IMR-90 (cell line): ENCODE measurements at regions of chr19 and their contacts with region 1.

Region 1: DNA sequence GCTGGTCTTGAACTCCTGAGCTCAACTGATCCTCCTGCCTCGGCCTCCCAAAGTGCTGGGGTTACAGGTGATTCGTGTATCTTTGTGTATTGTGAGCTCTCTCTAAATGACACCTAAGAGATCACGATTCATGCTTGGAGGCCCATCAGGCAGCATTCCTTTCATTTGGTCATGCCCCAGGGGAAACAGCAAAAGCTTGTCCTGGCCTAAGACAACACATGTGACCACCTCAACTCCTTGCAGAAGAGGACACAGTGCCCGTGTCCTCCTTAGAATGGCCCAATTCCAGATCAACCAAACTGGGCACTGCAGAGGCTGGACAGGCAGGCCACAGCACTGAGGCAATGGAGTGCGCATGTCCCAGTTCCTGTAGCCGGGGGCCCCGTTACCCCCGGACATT is 32.5 kb downstream of the ZC3H4 start:
- DNase-seq: no peak
- ATAC-seq: no peak
- H3K4me3 ChIP-seq: no peak overlapping the region
- H3K27ac ChIP-seq: no peak overlapping the region
- H3K4me1 ChIP-seq: peaks cover 3% of the 10 kb centered on the region
- H3K27me3 ChIP-seq: no peaks in the 10 kb centered on the region
- CTCF ChIP-seq: no peak
- POLR2A ChIP-seq: no peak
- RAD21 ChIP-seq: no peak

Region 2: DNA sequence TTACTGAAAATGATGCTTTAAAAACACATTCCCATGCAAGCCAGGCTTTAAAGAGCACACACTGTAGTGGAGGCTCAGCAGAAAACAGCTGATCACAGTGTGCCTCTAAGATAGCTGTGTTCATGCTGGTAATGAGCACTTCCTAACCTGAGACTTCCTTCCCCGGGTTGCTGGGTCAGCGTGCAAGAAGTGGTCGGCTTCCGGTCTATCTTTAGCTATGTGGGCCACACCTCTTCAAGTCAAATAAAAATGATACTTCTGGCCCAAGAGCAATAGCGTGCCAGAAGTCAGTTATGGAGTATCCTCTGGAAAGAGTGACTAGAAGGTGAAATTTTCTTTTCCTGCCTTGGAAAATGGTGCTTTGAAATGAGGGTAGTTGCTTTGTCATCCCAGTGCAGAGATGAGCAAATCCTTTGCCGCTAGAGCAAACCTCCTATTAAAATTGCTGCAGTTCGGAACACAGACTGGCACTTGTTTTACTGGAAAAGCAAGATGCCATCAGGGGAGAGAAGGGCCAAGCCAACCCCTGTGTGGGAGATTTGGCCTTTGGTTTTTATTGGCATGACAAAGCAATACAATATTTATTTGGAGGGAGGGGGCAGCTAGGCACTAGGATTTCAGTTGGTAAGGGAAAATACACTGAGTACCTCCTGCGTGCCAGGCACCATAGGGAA is 156.1 kb before region 1 on chr19:
- CTCF ChIA-PET with region 1: no interaction called
- POLR2A ChIA-PET with region 1: no interaction called
- dilution Hi-C with region 1: no loop called
- in situ Hi-C with region 1: no loop called
- intact Hi-C with region 1: no loop called
- DNase-seq: no peak
- ATAC-seq: no peak
- H3K4me3 ChIP-seq: no peak overlapping the region
- H3K27ac ChIP-seq: no peak overlapping the region
- H3K4me1 ChIP-seq: peaks cover 18% of the 10 kb centered on the region
- H3K27me3 ChIP-seq: no peaks in the 10 kb centered on the region
- CTCF ChIP-seq: no peak
- POLR2A ChIP-seq: no peak
- RAD21 ChIP-seq: no peak

Region 3: DNA sequence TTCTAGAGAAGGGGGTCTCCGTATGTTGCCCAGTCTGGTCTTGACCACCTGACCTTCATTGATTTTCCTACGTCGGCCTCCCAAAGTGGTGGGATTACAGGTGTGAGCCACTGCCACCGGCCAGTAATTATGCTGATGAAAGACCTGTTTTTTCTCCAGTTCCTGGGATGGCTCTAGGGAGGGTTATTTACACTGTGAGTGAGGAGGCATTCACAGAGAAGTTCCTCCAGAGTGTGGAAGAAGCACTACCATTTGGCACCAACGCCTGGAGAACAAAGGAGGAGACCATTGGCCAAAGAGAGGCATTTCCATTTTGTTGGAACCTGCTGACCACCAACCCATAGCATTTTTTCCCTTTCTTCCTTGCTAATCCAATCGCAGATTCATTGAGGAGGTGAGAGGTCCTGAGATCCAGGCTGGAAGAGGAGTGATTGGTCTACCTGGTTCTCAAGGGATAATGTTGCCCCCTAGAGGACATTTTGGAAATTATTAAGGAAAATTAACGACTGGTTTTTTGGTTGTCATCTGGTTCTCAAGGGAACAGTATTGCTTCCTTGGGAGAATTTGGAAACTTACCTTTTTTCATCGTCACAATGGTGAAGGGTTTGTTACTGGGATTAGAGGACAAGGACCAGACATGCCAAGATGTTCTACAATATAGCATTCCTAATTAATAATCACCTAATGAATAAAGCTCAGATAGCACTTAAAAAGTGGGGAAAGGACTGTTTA is 44.0 kb after region 1 on chr19:
- CTCF ChIA-PET with region 1: interaction called, 4 read pairs
- POLR2A ChIA-PET with region 1: no interaction called
- dilution Hi-C with region 1: no loop called
- in situ Hi-C with region 1: loop called (anchors 5 kb)
- intact Hi-C with region 1: loop called (anchors 1 kb)
- DNase-seq: peak; percentile 78
- ATAC-seq: peak; percentile 71
- H3K4me3 ChIP-seq: no peak overlapping the region
- H3K27ac ChIP-seq: no peak overlapping the region
- H3K4me1 ChIP-seq: peaks cover 5% of the 10 kb centered on the region
- H3K27me3 ChIP-seq: no peaks in the 10 kb centered on the region
- CTCF ChIP-seq: peak; percentile 83
- POLR2A ChIP-seq: no peak
- RAD21 ChIP-seq: peak; percentile 76